HepG2 (cell line): ENCODE measurements at regions of chr5 and their contacts with region 1.

Region 1: DNA sequence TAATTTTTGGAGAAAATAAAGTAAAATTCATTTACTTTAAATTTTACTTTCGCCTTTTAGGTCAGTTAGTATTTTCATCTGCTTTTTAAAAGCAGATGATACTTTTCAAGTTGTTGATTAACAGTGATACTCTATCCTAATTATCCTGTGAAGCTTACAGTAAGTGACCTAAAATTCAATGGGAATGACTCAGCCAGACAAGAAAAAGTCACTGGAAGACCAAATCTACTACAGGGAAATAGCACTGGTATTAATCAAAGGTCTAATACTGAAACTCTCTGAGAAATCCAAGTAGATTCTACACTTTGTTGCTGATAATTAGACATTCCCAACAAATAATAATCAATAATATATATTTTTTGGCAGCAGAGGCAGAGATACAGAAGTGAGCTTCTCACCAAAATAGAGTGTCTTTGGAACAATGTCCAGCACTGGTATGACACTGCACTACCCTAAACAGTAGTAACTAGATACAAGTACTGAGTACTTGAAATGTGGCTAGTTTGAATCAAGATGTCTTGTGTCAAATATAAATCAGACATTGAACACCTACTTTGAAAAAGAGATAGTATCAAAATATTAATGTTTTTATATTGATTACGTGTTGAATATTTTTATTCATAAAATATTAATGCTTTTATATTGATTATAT is 22.8 kb upstream of the ELL2 start:
- DNase-seq: no peak
- ATAC-seq: no peak
- H3K4me3 ChIP-seq: no peak overlapping the region
- H3K27ac ChIP-seq: peak overlapping the region; percentile 40
- H3K4me1 ChIP-seq: peaks cover 67% of the 10 kb centered on the region
- H3K27me3 ChIP-seq: no peaks in the 10 kb centered on the region
- CTCF ChIP-seq: no peak
- EP300 ChIP-seq: no peak
- POLR2A ChIP-seq: no peak
- RAD21 ChIP-seq: no peak

Region 2: GRCh38 chr5:95864944-95865504 is 119.4 kb before region 1 on chr5:
- CTCF ChIA-PET with region 1: no interaction called
- POLR2A ChIA-PET with region 1: interaction called, 13 read pairs
- in situ Hi-C with region 1: no loop called
- intact Hi-C with region 1: no loop called
- DNase-seq: peak; percentile 99
- ATAC-seq: peak; percentile 91
- H3K4me3 ChIP-seq: peak overlapping the region in 2 of 3 experiments; percentile 32 to 41; a peak in 3 of 6 replicates
- H3K27ac ChIP-seq: peak overlapping the region; percentile 98
- H3K4me1 ChIP-seq: peaks cover 72% of the 10 kb centered on the region
- H3K27me3 ChIP-seq: no peaks in the 10 kb centered on the region
- CTCF ChIP-seq: no peak
- EP300 ChIP-seq: peak; percentile 48 to 89; a peak in 2 of 4 replicates
- POLR2A ChIP-seq: peak; percentile 54 to 73; a peak in 3 of 4 replicates
- RAD21 ChIP-seq: no peak

Region 3: GRCh38 chr5:95973793-95974325 is 10.6 kb before region 1 on chr5:
- CTCF ChIA-PET with region 1: no interaction called
- POLR2A ChIA-PET with region 1: interaction called, 27 read pairs
- in situ Hi-C with region 1: no loop called
- intact Hi-C with region 1: no loop called
- DNase-seq: no peak
- ATAC-seq: no peak
- H3K4me3 ChIP-seq: no peak overlapping the region
- H3K27ac ChIP-seq: no peak overlapping the region
- H3K4me1 ChIP-seq: peaks cover 49% of the 10 kb centered on the region
- H3K27me3 ChIP-seq: no peaks in the 10 kb centered on the region
- CTCF ChIP-seq: no peak
- EP300 ChIP-seq: no peak
- POLR2A ChIP-seq: no peak
- RAD21 ChIP-seq: no peak

Region 4: GRCh38 chr5:96070625-96071246 is 86.3 kb after region 1 on chr5:
- CTCF ChIA-PET with region 1: no interaction called
- POLR2A ChIA-PET with region 1: no interaction called
- in situ Hi-C with region 1: no loop called
- intact Hi-C with region 1: no loop called
- DNase-seq: no peak
- ATAC-seq: no peak
- H3K4me3 ChIP-seq: no peak overlapping the region
- H3K27ac ChIP-seq: no peak overlapping the region
- H3K4me1 ChIP-seq: peaks cover 41% of the 10 kb centered on the region
- H3K27me3 ChIP-seq: no peaks in the 10 kb centered on the region
- CTCF ChIP-seq: no peak
- EP300 ChIP-seq: no peak
- POLR2A ChIP-seq: no peak
- RAD21 ChIP-seq: no peak

Region 5: DNA sequence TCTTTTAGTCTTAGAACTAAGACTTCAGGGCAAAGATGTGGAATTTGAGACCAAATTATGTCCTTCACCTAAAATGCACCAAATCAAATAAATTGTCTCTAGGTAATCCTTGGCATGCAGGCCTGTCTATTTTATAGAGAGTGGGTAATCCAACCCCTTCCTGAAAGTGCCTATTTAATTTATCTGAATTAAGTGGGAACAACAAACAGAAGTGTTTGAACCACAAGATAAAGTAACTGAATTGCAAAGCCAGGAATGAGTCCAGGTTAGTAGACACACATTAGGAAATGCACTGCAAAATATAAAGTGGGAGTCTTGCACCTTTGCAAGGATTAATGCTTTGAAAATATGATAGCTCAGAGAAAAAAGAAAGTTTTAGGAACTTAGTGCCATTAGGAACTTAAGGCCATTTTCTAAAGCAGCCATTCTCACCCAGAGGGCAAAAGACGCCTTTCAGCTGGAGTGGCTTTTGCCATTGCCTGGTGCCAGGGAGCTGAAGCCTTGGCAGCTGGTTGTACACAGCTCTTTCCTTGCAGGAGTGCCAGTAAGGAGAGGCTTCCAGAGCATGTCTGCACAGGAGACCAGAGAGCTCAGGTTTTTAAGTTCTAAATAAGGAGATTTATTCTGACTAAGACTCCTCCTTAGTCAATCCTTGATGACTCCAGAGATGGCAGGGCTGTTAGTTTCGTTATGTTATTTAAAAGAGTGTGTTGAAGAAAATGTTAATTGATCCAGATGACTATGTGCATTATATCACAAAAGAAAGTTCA is 128.9 kb after region 1 on chr5:
- CTCF ChIA-PET with region 1: no interaction called
- POLR2A ChIA-PET with region 1: interaction called, 35 read pairs
- in situ Hi-C with region 1: no loop called
- intact Hi-C with region 1: loop called (anchors 2 kb)
- DNase-seq: no peak
- ATAC-seq: no peak
- H3K4me3 ChIP-seq: no peak overlapping the region
- H3K27ac ChIP-seq: no peak overlapping the region
- H3K4me1 ChIP-seq: peaks cover 89% of the 10 kb centered on the region
- H3K27me3 ChIP-seq: no peaks in the 10 kb centered on the region
- CTCF ChIP-seq: no peak
- EP300 ChIP-seq: no peak
- POLR2A ChIP-seq: no peak
- RAD21 ChIP-seq: no peak

Region 6: DNA sequence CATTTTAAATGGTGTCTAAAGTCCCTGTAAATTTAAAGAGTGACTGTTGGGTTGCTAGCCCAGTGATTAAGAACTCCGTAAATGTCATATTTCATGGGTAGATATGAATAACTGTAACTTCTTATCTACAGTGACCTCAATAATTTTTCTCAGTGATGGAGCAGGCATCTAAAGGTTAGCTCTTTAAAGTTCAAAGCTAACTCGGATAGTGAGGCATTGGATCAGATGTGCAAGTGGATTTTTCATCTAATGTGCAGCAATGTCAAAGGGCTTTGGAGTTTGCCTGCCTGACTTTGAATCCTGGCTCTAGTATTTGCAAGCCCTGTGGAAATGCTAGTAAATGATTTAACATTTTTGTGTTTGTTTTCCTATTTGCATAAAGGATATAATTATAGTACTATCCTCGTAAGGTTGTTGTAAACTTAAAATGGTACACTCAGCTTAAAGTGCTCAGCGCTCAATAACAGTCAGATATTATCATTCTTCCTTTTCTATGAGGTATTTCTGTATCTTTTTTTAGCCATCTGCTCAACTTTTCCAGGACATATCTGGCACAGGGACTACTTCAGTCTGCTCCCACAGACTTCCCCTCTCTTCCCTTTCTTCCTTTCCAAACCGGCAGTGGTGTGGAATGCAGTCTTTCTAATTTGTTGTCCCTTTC is 140.9 kb after region 1 on chr5:
- CTCF ChIA-PET with region 1: no interaction called
- POLR2A ChIA-PET with region 1: interaction called, 35 read pairs
- in situ Hi-C with region 1: no loop called
- intact Hi-C with region 1: no loop called
- DNase-seq: peak; percentile 92
- ATAC-seq: peak; percentile 92
- H3K4me3 ChIP-seq: peak overlapping the region; percentile 36 to 61 (median 44); a peak in 4 of 6 replicates
- H3K27ac ChIP-seq: peak overlapping the region; percentile 86
- H3K4me1 ChIP-seq: peaks cover 95% of the 10 kb centered on the region
- H3K27me3 ChIP-seq: no peaks in the 10 kb centered on the region
- CTCF ChIP-seq: no peak
- EP300 ChIP-seq: peak in 1 of 2 experiments; percentile 91; a peak in 2 of 4 replicates
- POLR2A ChIP-seq: peak in 1 of 2 experiments; percentile 43; a peak in 1 of 4 replicates
- RAD21 ChIP-seq: no peak

Region 7: GRCh38 chr5:96187309-96188027 is 203.1 kb after region 1 on chr5:
- CTCF ChIA-PET with region 1: no interaction called
- POLR2A ChIA-PET with region 1: interaction called, 15 read pairs
- in situ Hi-C with region 1: no loop called
- intact Hi-C with region 1: no loop called
- DNase-seq: peak; percentile 93
- ATAC-seq: peak; percentile 98
- H3K4me3 ChIP-seq: no peak overlapping the region; a peak in 1 of 6 replicates
- H3K27ac ChIP-seq: peak overlapping the region; percentile 61
- H3K4me1 ChIP-seq: peaks cover 47% of the 10 kb centered on the region
- H3K27me3 ChIP-seq: no peaks in the 10 kb centered on the region
- CTCF ChIP-seq: no peak
- EP300 ChIP-seq: peak; percentile 13 to 81; a peak in 2 of 4 replicates
- POLR2A ChIP-seq: no peak
- RAD21 ChIP-seq: no peak; the same call in 1 of the 2 replicates

Region 8: GRCh38 chr5:96198356-96199058 is 214.1 kb after region 1 on chr5:
- CTCF ChIA-PET with region 1: no interaction called
- POLR2A ChIA-PET with region 1: interaction called, 7 read pairs
- in situ Hi-C with region 1: no loop called
- intact Hi-C with region 1: loop called (anchors 1 kb)
- DNase-seq: no peak
- ATAC-seq: no peak
- H3K4me3 ChIP-seq: no peak overlapping the region; a peak in 1 of 6 replicates
- H3K27ac ChIP-seq: peak overlapping the region; percentile 97
- H3K4me1 ChIP-seq: peaks cover 88% of the 10 kb centered on the region
- H3K27me3 ChIP-seq: no peaks in the 10 kb centered on the region
- CTCF ChIP-seq: no peak
- EP300 ChIP-seq: no peak
- POLR2A ChIP-seq: no peak
- RAD21 ChIP-seq: no peak